Common myeloid progenitor, CD34-positive (primary cell): ENCODE measurements at regions of chr5 and their contacts with region 1.

Region 1: DNA sequence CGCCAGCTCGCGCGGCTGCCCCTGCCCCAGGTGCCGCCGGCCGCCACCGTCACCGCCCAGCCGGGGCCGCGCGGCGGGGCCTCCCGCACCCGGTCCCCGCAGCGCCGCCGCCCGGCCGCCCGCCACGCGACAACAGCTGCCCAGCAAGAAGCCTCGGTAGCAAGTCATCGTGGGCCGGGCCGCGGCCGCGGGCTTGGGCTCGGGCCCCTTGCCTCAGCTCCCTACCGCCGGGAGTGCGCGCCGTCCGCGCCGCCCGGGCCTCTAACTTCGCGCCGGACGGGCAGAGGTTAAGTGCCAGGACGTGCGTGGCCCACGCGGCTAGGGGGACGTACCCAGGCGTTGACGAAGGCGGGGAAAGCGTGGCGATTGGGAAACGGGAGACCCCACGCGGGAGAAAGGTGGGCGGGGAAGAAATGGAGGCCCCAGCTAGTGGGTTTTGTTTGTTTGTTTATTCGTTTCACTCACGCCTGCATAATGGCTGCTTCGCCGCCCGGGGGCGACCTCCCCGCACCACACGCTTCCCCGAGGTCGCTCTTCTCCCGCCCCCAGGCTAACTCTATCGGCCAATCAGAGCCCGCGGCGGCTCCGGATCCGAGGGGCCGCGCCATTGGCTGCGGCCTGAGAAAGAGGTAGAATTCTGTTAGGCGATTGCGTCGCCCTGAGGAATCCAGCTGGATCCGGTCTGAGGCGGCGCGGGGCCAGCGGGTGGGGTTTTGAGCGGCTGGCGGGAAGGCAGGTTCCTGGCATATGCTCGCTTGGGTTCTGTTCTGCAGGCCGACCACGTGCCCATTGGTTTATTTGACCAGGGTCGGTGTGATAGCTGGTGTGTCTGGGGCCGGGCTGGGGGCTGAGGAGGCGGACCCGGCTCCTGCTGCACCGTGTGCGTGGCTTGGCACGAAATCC is at the start of gene NADK2:
- DNase-seq: peak; percentile 97 to 99 (median 99)
- H3K4me3 ChIP-seq: peak within 1 kb of the TSS; percentile 78 to 96 (median 85)
- H3K27ac ChIP-seq: peak within 1 kb of the TSS; percentile 74 to 87
- H3K4me1 ChIP-seq: peaks cover 6 to 40% (median 19%) of the 10 kb centered on the region in 4 experiments
- H3K27me3 ChIP-seq: no peaks in the 10 kb centered on the region

Region 2: DNA sequence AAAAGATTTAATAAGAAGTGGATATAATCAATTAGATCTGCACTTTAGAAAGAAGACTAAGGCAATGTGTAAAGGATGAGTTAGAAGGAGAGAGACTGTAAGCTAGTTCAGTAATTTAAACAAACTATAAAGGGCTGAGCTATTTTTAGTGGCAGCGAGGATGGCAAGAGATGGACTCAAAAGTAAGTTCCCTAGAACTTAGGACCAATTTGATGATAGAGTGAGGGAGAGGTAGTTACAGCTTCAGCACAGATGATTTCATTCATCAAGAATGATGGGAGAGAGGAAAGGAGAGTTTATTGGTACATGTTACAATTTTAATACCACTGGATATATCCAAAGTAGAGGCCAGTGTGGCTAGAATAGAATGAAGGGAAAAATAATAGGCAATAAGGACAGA is 19.3 kb before region 1 on chr5:
- CTCF ChIA-PET with region 1: interaction called, 10 read pairs
- POLR2A ChIA-PET with region 1: interaction called, 3 read pairs
- DNase-seq: no peak
- H3K4me3 ChIP-seq: no peak overlapping the region
- H3K27ac ChIP-seq: no peak overlapping the region
- H3K4me1 ChIP-seq: no peaks in the 10 kb centered on the region
- H3K27me3 ChIP-seq: no peaks in the 10 kb centered on the region

Region 3: DNA sequence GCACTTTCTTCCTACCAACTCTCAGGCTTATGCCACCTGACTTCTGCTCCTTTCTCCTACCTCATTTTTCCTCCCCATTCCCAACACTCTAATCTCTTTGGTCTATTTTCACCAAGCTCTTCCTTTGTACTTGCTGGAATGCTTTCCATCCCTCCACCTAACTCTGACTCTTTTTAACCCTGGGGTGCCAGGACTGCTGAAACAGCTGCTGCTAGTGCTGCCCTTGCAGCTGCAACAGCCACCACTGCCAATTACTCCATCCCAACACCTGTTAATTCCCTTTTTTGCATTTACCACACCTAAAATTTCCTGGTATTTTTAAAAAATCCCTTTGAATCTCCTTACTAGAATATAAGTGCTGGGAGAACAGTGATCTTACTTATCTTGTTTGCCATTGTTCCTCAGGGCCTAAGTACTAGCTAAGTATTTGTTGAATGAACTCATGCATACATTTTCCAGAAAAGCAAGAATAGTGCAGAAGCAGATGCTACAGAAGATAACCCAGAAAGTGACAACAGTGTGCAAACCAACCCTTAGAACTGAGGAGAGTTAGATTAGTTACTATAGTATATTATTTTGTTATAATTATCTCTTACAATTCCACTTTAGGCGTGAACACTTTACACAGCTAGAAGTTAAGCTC is 11.6 kb before region 1 on chr5:
- CTCF ChIA-PET with region 1: interaction called, 13 read pairs
- POLR2A ChIA-PET with region 1: no interaction called
- DNase-seq: no peak
- H3K4me3 ChIP-seq: no peak overlapping the region
- H3K27ac ChIP-seq: no peak overlapping the region
- H3K4me1 ChIP-seq: no peaks in the 10 kb centered on the region
- H3K27me3 ChIP-seq: no peaks in the 10 kb centered on the region

Region 4: DNA sequence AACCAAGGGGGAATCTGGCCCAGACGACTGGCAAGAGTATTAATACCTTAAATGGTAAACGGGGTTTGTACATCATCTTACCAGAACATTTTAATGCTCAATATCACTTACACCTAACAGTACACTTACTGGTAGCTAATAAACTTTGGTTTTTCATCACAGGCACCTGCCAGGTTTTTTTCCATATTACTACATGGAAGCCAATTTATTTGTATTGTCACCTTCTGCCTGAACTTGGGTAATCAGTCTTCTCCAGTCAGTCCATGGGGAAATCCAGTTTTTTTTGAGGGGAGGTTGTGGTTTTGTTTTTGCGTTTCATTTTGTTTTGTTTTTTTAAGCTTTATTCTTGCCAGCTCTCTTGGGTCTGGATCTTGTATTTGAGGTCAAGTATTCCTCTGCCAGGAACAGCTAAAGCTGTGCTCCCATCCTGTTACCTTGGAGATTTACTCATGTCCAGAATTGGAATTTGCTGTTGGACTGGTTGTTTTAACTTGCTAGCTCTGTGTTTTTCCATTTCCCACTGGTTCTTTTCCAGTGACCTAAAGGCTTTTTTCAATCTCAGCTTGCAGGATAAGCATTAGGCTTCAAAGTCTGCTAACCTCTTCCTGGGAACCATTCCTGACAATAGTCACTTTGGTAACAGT is 11.0 kb after region 1 on chr5:
- CTCF ChIA-PET with region 1: interaction called, 10 read pairs
- POLR2A ChIA-PET with region 1: interaction called, 5 read pairs
- DNase-seq: no peak
- H3K4me3 ChIP-seq: no peak overlapping the region
- H3K27ac ChIP-seq: no peak overlapping the region
- H3K4me1 ChIP-seq: no peaks in the 10 kb centered on the region
- H3K27me3 ChIP-seq: no peaks in the 10 kb centered on the region

Region 5: DNA sequence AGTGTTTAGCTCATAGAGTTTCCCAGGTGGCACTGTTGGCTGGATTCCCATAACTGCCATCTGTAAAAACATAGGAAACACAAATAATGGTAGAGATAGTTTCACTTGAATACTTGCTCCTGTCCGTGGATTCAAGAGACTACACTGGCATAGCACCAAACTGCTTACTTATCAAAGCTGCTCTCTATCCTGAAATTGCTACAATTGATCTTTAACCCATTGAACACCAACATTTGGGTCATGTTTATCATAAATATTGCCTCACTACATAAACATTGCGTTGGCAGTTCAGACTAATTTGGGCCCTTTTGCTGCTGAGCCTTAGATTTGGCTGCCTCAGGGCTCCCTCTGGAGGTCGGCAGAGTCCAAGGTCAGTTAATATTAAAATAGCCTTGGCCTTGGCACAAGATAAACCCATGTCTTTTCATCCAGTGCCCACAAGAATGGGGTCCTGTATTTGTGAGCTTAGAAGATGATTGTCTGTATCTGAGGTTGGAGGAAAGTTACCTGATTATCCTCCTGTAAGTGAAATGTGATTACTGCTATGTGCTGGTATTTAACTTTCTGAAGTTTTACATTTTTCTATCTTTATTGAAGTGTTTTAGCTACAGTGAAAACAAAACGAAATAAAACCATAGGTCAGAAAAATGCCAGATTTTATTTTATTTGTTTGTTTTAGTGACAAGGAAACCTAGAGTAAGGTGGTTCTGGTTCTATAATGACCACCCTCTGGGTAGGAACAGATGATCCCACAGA is 63.9 kb after region 1 on chr5:
- CTCF ChIA-PET with region 1: interaction called, 11 read pairs
- POLR2A ChIA-PET with region 1: interaction called, 3 read pairs
- DNase-seq: peak; percentile 60 to 72 (median 67)
- H3K4me3 ChIP-seq: no peak overlapping the region
- H3K27ac ChIP-seq: no peak overlapping the region
- H3K4me1 ChIP-seq: peaks cover 0 to 26% (median 4%) of the 10 kb centered on the region in 4 experiments
- H3K27me3 ChIP-seq: no peaks in the 10 kb centered on the region

Region 6: DNA sequence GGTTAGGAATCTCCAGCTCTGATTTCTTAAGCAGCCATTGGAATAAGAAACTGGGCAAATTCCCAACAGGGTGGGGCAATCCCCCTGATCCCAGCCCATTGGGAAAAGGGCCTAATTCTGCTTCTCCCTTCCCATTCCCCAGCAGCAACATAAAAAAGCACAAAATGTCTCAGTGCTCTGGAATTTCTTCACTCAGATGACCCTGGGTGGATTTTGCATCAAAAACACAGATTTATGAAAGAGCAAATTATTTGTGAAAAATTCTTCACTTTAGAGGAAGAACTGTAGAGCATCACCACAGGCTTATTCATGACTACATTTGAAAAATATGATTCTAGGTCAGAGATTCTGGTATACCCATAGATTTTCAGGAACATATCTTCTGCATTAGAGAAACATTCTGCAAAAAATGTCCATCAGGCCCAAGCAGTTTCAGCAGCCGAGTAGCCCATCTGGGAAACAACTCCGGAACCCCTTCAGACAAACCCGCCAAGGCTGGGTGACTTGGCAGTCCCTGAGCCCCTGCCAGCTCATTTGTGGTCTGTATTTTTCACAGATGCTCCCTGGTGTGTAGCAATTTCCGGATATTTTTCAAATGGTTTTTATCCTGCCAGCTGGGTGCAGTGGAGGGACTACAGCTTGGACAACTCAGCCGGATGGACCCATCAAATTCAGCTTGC is 161.9 kb after region 1 on chr5:
- CTCF ChIA-PET with region 1: interaction called, 18 read pairs
- POLR2A ChIA-PET with region 1: no interaction called
- DNase-seq: peak; percentile 87 to 97 (median 96)
- H3K4me3 ChIP-seq: peak overlapping the region in 1 of 7 experiments; percentile 15
- H3K27ac ChIP-seq: no peak overlapping the region
- H3K4me1 ChIP-seq: peaks cover 0 to 51% (median 8%) of the 10 kb centered on the region in 4 experiments
- H3K27me3 ChIP-seq: no peaks in the 10 kb centered on the region